ENCODE measurements at regions of chr21 and their contacts with region 1.

Region 1: GRCh38 chr21:31211836-31212235 is 132.2 kb downstream of the TIAM1 start:
- DNase-seq: no peak
- ATAC-seq: no peak

Region 2: GRCh38 chr21:29265690-29266479 is 1946.0 kb before region 1 on chr21:
- intact Hi-C with region 1: no loop called
- DNase-seq: no peak
- ATAC-seq: no peak

Region 3: DNA sequence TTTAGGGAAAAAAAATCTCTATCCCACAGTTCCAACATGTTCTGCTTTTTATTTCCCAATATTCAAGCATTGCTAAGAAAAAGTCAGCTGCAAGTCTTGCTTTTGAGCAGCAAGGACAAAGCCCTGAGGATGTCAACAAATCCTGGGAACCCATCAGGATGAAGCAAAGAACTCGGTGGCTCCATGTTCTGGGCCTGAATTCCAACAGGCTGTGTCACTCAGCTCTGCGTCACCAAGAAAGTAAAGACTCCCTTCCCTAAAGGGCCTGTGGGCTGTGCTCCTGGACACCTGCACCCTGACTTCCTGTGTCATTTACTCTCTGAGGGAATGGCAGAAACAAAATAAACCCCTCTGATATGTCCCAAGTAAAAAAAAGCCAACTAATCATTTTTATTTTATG is 36.8 kb after region 1 on chr21:
- intact Hi-C with region 1: loop called (anchors 1 kb)
- DNase-seq: no peak
- ATAC-seq: no peak

Measured in sciatic nerve (tissue), 2 donors.